ENCODE measurements at regions of chr16 and their contacts with region 1.

Region 1: GRCh38 chr16:7518158-7518557 is 185.5 kb downstream of the RBFOX1 start:
- DNase-seq: no peak
- H3K4me3 ChIP-seq: no peak overlapping the region
- H3K27ac ChIP-seq: no peak overlapping the region
- H3K4me1 ChIP-seq: no peaks in the 10 kb centered on the region
- H3K27me3 ChIP-seq: no peaks in the 10 kb centered on the region
- CTCF ChIP-seq: no peak
- POLR2A ChIP-seq: no peak

Region 2: GRCh38 chr16:7497691-7498090 is 20.5 kb before region 1 on chr16:
- intact Hi-C with region 1: no loop called
- DNase-seq: no peak
- H3K4me3 ChIP-seq: no peak overlapping the region
- H3K27ac ChIP-seq: no peak overlapping the region
- H3K4me1 ChIP-seq: no peaks in the 10 kb centered on the region
- H3K27me3 ChIP-seq: no peaks in the 10 kb centered on the region
- CTCF ChIP-seq: no peak
- POLR2A ChIP-seq: no peak

Region 3: DNA sequence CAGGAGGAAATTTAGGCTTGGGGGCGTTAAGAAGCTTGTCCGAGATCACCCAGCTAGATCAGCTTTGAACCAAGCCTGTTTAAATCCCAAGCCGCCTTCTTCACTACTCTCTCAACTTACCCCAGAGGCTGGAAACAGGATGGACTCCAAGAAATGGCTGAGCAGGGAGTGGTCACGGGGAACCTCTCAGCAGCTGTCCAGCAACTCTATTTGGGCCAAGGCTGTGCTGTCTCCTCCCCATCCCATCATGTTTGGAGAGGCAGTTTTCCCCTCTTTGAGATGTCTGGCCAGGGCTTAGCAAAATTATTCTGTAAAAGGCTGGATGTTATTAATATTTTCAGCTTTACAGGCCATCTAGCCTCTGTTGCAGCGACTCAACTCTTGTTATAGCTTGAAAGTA is 120.1 kb after region 1 on chr16:
- intact Hi-C with region 1: loop called (anchors 2 kb)
- DNase-seq: no peak
- H3K4me3 ChIP-seq: no peak overlapping the region
- H3K27ac ChIP-seq: no peak overlapping the region
- H3K4me1 ChIP-seq: no peaks in the 10 kb centered on the region
- H3K27me3 ChIP-seq: no peaks in the 10 kb centered on the region
- CTCF ChIP-seq: no peak
- POLR2A ChIP-seq: no peak

Measured in breast epithelium (tissue), 4 donors.